B cell (primary cell): ENCODE measurements at regions of chr7 and their contacts with region 1.

Region 1: GRCh38 chr7:90412458-90413184 is 9.4 kb downstream of the CLDN12 start:
- DNase-seq: peak; percentile 28
- ATAC-seq: peak; percentile 58
- H3K4me3 ChIP-seq: no peak overlapping the region
- H3K4me3 Mint-ChIP-seq: no peak overlapping the region
- H3K27ac ChIP-seq: no peak overlapping the region
- H3K27ac Mint-ChIP-seq: no peak overlapping the region
- H3K4me1 ChIP-seq: no peaks in the 10 kb centered on the region
- H3K4me1 Mint-ChIP-seq: no peaks in the 10 kb centered on the region
- H3K27me3 ChIP-seq: no peaks in the 10 kb centered on the region
- H3K27me3 Mint-ChIP-seq: no peaks in the 10 kb centered on the region
- CTCF ChIP-seq: no peak

Region 2: DNA sequence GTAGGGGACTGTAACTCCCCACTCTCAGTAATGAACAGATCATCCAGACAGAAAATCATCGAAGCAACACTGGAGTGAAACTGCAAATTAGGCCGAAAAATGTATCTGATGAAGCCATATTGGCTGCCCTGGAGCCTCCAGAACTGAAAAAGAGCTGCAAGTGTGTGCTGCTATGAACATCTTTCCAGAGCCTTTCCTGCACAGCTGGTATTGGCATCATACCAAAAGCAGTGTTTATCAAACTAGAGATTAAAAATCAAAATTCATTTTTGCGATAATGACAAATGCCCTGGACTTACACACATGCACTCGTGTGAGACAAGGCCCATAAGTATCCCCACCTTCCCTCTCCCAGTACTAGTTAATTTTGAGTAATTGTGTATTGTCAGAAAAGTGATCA is 16.2 kb before region 1 on chr7:
- CTCF ChIA-PET with region 1: no interaction called
- POLR2A ChIA-PET with region 1: no interaction called
- intact Hi-C with region 1: no loop called
- DNase-seq: no peak
- ATAC-seq: no peak
- H3K4me3 ChIP-seq: no peak overlapping the region
- H3K4me3 Mint-ChIP-seq: no peak overlapping the region
- H3K27ac ChIP-seq: no peak overlapping the region
- H3K27ac Mint-ChIP-seq: no peak overlapping the region
- H3K4me1 ChIP-seq: no peaks in the 10 kb centered on the region
- H3K4me1 Mint-ChIP-seq: no peaks in the 10 kb centered on the region
- H3K27me3 ChIP-seq: no peaks in the 10 kb centered on the region
- H3K27me3 Mint-ChIP-seq: no peaks in the 10 kb centered on the region
- CTCF ChIP-seq: no peak

Region 3: DNA sequence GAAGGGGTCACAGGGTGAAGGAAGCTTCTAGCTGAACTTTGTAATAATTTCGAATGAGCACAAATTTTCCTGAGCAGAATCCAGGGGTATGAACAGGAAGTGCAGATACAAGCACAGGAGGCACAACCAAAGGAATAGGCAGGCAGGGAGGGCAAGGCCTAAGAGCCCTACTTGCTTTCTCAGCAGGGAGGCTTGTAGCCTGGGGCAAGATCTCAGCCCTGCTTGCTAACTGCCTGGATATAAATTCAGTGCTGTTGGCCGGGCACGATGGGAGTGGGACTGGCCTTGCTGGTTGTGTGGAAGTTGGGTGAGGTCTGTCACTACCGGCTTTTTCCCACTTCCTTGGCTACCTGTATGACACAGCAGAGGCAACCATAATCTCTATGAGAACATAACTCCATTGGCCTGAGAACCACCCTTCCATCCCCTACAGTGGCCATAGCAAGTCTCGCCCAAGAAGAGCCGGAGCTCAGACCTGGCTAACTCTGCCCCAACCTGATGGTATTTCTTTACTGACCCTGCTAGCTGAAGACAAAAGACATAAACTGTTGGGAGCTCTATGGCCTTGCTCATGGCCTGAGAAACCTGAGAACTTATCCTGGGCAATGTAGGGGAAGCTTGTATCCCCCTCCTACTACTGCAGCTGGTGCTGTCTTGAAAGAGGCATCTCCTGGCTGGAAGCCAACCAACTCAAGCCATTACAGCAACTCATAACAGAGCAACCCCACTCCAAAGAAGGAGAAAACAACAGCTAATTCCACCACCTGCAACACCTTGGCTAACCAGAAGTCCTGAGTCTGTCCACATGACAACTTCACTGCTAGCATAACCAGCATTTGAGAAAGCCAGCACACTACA is 18.2 kb after region 1 on chr7:
- CTCF ChIA-PET with region 1: interaction called, 76 read pairs
- POLR2A ChIA-PET with region 1: no interaction called
- intact Hi-C with region 1: no loop called
- DNase-seq: no peak
- ATAC-seq: no peak
- H3K4me3 ChIP-seq: no peak overlapping the region
- H3K4me3 Mint-ChIP-seq: no peak overlapping the region
- H3K27ac ChIP-seq: no peak overlapping the region
- H3K27ac Mint-ChIP-seq: no peak overlapping the region
- H3K4me1 ChIP-seq: no peaks in the 10 kb centered on the region
- H3K4me1 Mint-ChIP-seq: no peaks in the 10 kb centered on the region
- H3K27me3 ChIP-seq: peaks cover 0 to 3% (median 0%) of the 10 kb centered on the region in 4 experiments
- H3K27me3 Mint-ChIP-seq: peaks cover 34% of the 10 kb centered on the region
- CTCF ChIP-seq: no peak